HepG2 (cell line): ENCODE measurements at regions of chr18 and their contacts with region 1.

Region 1: DNA sequence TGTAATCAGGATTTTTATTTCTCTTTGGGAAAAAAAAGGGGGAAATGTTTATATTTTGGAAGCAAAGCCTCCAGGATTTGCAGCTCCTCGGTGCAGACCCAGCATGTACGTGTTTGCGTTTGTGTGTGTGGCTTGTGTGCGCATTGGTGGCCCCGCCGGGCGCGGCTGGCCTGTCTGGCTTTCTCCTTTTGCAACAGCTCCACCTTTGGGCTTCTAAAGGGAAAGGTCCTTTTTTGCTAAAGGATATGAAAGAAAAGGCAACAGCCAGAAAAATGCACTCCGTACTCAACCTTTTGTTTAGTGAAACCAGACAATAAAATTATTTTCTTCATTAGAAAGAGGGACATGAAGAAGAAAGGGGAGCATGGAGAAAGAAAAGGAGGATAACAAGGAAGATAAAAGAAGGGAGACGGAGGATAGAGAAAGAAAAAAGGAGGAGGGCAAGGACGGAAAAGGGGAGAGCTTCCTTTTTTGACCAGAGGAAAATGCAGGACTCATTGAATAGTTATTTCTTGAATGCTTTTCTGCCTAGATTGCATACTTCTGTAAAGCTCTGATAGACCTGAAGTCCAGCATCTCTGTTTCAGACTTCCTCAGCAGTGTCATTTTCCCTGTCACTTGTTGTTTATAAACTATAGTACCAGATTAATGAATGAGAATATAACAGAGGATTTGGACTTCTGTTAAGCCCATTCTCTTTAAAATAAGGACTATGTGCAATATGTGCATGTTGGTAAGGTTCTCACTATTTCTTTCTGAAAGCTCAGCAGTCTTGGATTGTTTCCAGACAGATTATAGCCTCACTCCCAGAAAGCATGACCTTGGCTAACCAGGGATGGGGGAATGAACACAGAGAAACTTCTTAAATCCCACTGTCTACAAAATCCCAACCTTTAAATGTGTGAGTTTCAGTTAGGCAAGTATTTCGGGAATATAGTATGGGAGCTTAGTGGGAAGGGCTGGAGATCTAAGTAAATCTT is 563.1 kb upstream of the PIK3C3 start:
- DNase-seq: peak; percentile 47
- ATAC-seq: peak; percentile 96
- H3K4me3 ChIP-seq: no peak overlapping the region
- H3K27ac ChIP-seq: no peak overlapping the region
- H3K4me1 ChIP-seq: no peaks in the 10 kb centered on the region
- H3K27me3 ChIP-seq: no peaks in the 10 kb centered on the region; a peak in 1 of 5 replicates
- CTCF ChIP-seq: peak; percentile 80
- EP300 ChIP-seq: no peak
- POLR2A ChIP-seq: no peak
- RAD21 ChIP-seq: peak; percentile 48; the same call in 1 of the 2 replicates

Region 2: DNA sequence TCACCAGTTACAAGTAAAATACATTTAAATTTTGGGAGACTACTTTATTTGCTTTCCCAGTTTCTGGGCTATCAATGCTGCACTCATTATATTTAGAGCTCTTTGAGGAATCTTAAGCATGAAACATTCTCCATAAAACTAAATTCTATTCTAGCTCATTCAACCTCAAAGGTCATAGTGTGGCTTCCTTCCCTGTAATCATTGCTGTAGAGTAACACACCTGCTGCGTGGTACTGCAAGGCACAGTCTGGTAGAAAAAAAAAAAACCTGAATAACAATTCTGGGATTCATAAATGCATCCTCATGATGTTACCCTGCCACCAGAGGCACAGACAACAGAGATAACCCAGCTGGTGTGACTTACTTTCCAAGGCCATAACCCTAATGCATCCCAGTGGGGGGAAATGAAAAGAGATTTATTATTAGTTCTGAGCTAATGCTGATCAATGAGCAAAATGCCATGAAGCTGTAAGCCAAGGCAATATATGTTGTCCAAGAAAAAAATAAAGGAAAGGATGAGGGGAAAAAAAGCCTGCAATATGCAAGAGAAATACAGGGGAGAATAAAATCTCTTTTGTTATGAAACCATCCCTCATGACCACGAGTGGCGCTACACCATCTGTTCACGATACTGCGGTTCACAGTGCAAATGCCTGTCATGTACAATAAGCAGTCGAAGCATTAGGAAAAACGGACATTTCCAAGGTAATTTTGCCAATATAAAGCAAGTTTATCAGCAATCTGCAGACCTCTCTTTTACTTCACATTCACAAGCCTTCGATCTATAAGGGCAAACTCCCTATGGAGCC is 918.5 kb before region 1 on chr18:
- CTCF ChIA-PET with region 1: no interaction called
- POLR2A ChIA-PET with region 1: no interaction called
- in situ Hi-C with region 1: no loop called
- intact Hi-C with region 1: no loop called
- DNase-seq: peak; percentile 5
- ATAC-seq: peak; percentile 81
- H3K4me3 ChIP-seq: no peak overlapping the region
- H3K27ac ChIP-seq: no peak overlapping the region
- H3K4me1 ChIP-seq: no peaks in the 10 kb centered on the region
- H3K27me3 ChIP-seq: no peaks in the 10 kb centered on the region
- CTCF ChIP-seq: no peak
- EP300 ChIP-seq: no peak
- POLR2A ChIP-seq: no peak
- RAD21 ChIP-seq: no peak

Region 3: GRCh38 chr18:40529478-40529877 is 862.4 kb before region 1 on chr18:
- CTCF ChIA-PET with region 1: no interaction called
- POLR2A ChIA-PET with region 1: no interaction called
- in situ Hi-C with region 1: loop called (anchors 25 kb)
- intact Hi-C with region 1: loop called (anchors 1 kb)
- DNase-seq: peak; percentile 1
- ATAC-seq: peak; percentile 46; the same call in 1 of the 3 replicates
- H3K4me3 ChIP-seq: no peak overlapping the region
- H3K27ac ChIP-seq: no peak overlapping the region
- H3K4me1 ChIP-seq: no peaks in the 10 kb centered on the region
- H3K27me3 ChIP-seq: no peaks in the 10 kb centered on the region
- CTCF ChIP-seq: no peak
- EP300 ChIP-seq: no peak
- POLR2A ChIP-seq: no peak
- RAD21 ChIP-seq: no peak

Region 4: GRCh38 chr18:40935423-40935822 is 456.5 kb before region 1 on chr18:
- CTCF ChIA-PET with region 1: interaction called, 7 read pairs
- POLR2A ChIA-PET with region 1: no interaction called
- in situ Hi-C with region 1: loop called (anchors 10 kb)
- intact Hi-C with region 1: loop called (anchors 1 kb)
- DNase-seq: peak; percentile 35
- ATAC-seq: no peak
- H3K4me3 ChIP-seq: no peak overlapping the region
- H3K27ac ChIP-seq: no peak overlapping the region
- H3K4me1 ChIP-seq: no peaks in the 10 kb centered on the region
- H3K27me3 ChIP-seq: no peaks in the 10 kb centered on the region; a peak in 1 of 5 replicates
- CTCF ChIP-seq: peak; percentile 29; the same call in 1 of the 2 replicates
- EP300 ChIP-seq: no peak
- POLR2A ChIP-seq: no peak
- RAD21 ChIP-seq: no peak

Region 5: GRCh38 chr18:41343808-41344207 is 48.1 kb before region 1 on chr18:
- CTCF ChIA-PET with region 1: no interaction called
- POLR2A ChIA-PET with region 1: no interaction called
- in situ Hi-C with region 1: no loop called
- intact Hi-C with region 1: no loop called
- DNase-seq: no peak
- ATAC-seq: no peak
- H3K4me3 ChIP-seq: no peak overlapping the region
- H3K27ac ChIP-seq: no peak overlapping the region
- H3K4me1 ChIP-seq: no peaks in the 10 kb centered on the region
- H3K27me3 ChIP-seq: no peaks in the 10 kb centered on the region
- CTCF ChIP-seq: no peak
- EP300 ChIP-seq: no peak
- POLR2A ChIP-seq: no peak
- RAD21 ChIP-seq: no peak